ENCODE measurements at regions of chr11 and their contacts with region 1.

Region 1: GRCh38 chr11:35617687-35618496 is at the start of gene FJX1:
- DNase-seq: peak in 3 of 14 experiments; percentile 15 to 36 (median 32)
- ATAC-seq: no peak
- H3K4me3 ChIP-seq: peak within 1 kb of the TSS; percentile 12
- H3K4me3 Mint-ChIP-seq: peak within 1 kb of the TSS; percentile 80
- H3K27ac ChIP-seq: no peak within 1 kb of the TSS
- H3K27ac Mint-ChIP-seq: no peak within 1 kb of the TSS
- H3K4me1 ChIP-seq: peaks cover 19% of the 10 kb centered on the region
- H3K4me1 Mint-ChIP-seq: peaks cover 22% of the 10 kb centered on the region
- H3K27me3 ChIP-seq: peaks cover 33 to 71% of the 10 kb centered on the region in 2 experiments
- H3K27me3 Mint-ChIP-seq: peaks cover 73% of the 10 kb centered on the region
- CTCF ChIP-seq: no peak
- total RNA-seq, gene FJX1: not detected

Region 2: GRCh38 chr11:35780951-35781860 is 163.3 kb after region 1 on chr11:
- CTCF ChIA-PET with region 1: no interaction called
- POLR2A ChIA-PET with region 1: no interaction called
- intact Hi-C with region 1: no loop called
- DNase-seq: no peak
- ATAC-seq: no peak
- H3K4me3 ChIP-seq: no peak overlapping the region
- H3K4me3 Mint-ChIP-seq: no peak overlapping the region
- H3K27ac ChIP-seq: no peak overlapping the region
- H3K27ac Mint-ChIP-seq: no peak overlapping the region
- H3K4me1 ChIP-seq: peaks cover 5% of the 10 kb centered on the region
- H3K4me1 Mint-ChIP-seq: peaks cover 71% of the 10 kb centered on the region
- H3K27me3 ChIP-seq: no peaks in the 10 kb centered on the region
- H3K27me3 Mint-ChIP-seq: no peaks in the 10 kb centered on the region
- CTCF ChIP-seq: no peak

Region 3: GRCh38 chr11:35800970-35801953 is 183.4 kb after region 1 on chr11:
- CTCF ChIA-PET with region 1: no interaction called
- POLR2A ChIA-PET with region 1: no interaction called
- intact Hi-C with region 1: no loop called
- DNase-seq: peak in 1 of 14 experiments; percentile 4
- ATAC-seq: no peak
- H3K4me3 ChIP-seq: no peak overlapping the region
- H3K4me3 Mint-ChIP-seq: no peak overlapping the region
- H3K27ac ChIP-seq: no peak overlapping the region
- H3K27ac Mint-ChIP-seq: peak overlapping the region; percentile 34
- H3K4me1 ChIP-seq: no peaks in the 10 kb centered on the region
- H3K4me1 Mint-ChIP-seq: peaks cover 16% of the 10 kb centered on the region
- H3K27me3 ChIP-seq: no peaks in the 10 kb centered on the region
- H3K27me3 Mint-ChIP-seq: no peaks in the 10 kb centered on the region
- CTCF ChIP-seq: no peak

Region 4: DNA sequence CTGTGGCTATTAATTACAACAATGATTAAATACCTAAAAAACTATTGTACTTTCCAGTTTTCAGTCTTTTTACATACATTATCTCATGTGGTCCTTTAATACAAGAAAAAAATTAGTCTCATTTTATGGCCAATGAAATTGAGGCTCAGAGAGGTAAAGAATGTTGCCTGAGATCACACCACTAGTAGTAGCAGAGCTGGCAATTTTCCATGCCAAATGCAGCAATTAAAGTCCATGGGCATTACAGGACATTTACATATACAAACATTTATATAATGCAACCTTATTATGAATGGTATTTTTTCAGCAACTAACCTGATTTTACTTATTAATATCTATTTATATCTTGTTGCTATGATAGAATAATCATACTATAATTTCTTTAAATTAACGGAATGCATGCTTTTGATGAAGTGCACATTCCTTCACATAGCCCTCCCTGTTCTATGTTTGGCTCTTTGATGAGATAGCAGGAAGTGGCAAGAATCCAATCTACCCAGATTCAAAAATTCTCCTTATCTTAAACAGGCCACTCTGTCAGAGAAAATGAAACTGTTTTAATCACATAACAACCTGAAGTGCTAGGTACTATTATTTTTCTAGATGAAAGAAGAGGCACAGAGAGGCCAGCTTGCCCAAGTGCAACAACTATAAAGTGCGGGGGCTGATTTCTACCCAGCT is 205.1 kb after region 1 on chr11:
- CTCF ChIA-PET with region 1: no interaction called
- POLR2A ChIA-PET with region 1: no interaction called
- intact Hi-C with region 1: loop called in 1 of 2 experiments (anchors 2 kb)
- DNase-seq: no peak
- ATAC-seq: no peak
- H3K4me3 ChIP-seq: no peak overlapping the region
- H3K4me3 Mint-ChIP-seq: no peak overlapping the region
- H3K27ac ChIP-seq: no peak overlapping the region
- H3K27ac Mint-ChIP-seq: no peak overlapping the region
- H3K4me1 ChIP-seq: peaks cover 10% of the 10 kb centered on the region
- H3K4me1 Mint-ChIP-seq: peaks cover 19% of the 10 kb centered on the region
- H3K27me3 ChIP-seq: no peaks in the 10 kb centered on the region
- H3K27me3 Mint-ChIP-seq: no peaks in the 10 kb centered on the region
- CTCF ChIP-seq: no peak

Region 5: GRCh38 chr11:36265793-36266628 is 648.1 kb after region 1 on chr11:
- CTCF ChIA-PET with region 1: interaction called, 6 read pairs
- POLR2A ChIA-PET with region 1: no interaction called
- intact Hi-C with region 1: loop called (anchors 1 kb)
- DNase-seq: peak; percentile 19 to 74 (median 44)
- ATAC-seq: peak; percentile 58
- H3K4me3 ChIP-seq: no peak overlapping the region
- H3K4me3 Mint-ChIP-seq: no peak overlapping the region
- H3K27ac ChIP-seq: no peak overlapping the region
- H3K27ac Mint-ChIP-seq: no peak overlapping the region
- H3K4me1 ChIP-seq: peaks cover 2% of the 10 kb centered on the region
- H3K4me1 Mint-ChIP-seq: no peaks in the 10 kb centered on the region
- H3K27me3 ChIP-seq: no peaks in the 10 kb centered on the region
- H3K27me3 Mint-ChIP-seq: peaks cover 19% of the 10 kb centered on the region
- CTCF ChIP-seq: peak; percentile 79

Region 6: DNA sequence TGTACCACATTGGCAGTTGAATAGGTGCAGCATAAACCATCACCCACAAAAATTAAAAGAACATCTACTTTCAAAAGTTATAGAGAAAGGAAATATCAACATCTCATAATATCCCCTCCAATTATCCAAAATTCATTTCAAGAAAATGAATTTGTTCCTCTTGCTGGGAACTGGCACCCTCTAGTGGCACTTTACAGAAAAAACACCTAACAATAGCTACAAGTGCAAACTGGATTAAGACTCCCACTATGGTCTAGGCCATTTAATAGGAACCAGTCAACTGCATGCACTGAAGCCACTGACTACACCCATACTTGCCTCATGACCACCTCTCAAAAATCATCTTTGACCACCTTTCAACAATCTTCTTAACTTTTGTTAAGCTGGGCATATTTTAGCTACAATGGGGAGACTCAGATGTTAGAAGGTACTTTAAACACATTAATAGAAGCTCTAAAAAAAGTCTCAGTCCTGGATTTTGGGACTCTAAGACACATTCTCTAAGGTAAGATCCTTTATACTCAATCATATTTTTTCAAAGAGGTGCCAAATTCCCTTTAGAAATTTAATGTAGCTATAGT is 874.9 kb after region 1 on chr11:
- CTCF ChIA-PET with region 1: no interaction called
- POLR2A ChIA-PET with region 1: no interaction called
- intact Hi-C with region 1: loop called (anchors 1 to 2 kb)
- DNase-seq: peak in 6 of 14 experiments; percentile 11 to 77 (median 52)
- ATAC-seq: peak; percentile 67
- H3K4me3 ChIP-seq: no peak overlapping the region
- H3K4me3 Mint-ChIP-seq: no peak overlapping the region
- H3K27ac ChIP-seq: no peak overlapping the region
- H3K27ac Mint-ChIP-seq: peak overlapping the region; percentile 18
- H3K4me1 ChIP-seq: peaks cover 2% of the 10 kb centered on the region
- H3K4me1 Mint-ChIP-seq: peaks cover 33% of the 10 kb centered on the region
- H3K27me3 ChIP-seq: no peaks in the 10 kb centered on the region
- H3K27me3 Mint-ChIP-seq: no peaks in the 10 kb centered on the region
- CTCF ChIP-seq: peak; percentile 89

Region 7: GRCh38 chr11:36746886-36747710 is 1129.2 kb after region 1 on chr11:
- CTCF ChIA-PET with region 1: no interaction called
- POLR2A ChIA-PET with region 1: no interaction called
- intact Hi-C with region 1: loop called in 1 of 2 experiments (anchors 5 kb)
- DNase-seq: peak; percentile 53 to 91 (median 70)
- ATAC-seq: peak; percentile 100
- H3K4me3 ChIP-seq: no peak overlapping the region
- H3K4me3 Mint-ChIP-seq: no peak overlapping the region
- H3K27ac ChIP-seq: no peak overlapping the region
- H3K27ac Mint-ChIP-seq: no peak overlapping the region
- H3K4me1 ChIP-seq: no peaks in the 10 kb centered on the region
- H3K4me1 Mint-ChIP-seq: peaks cover 5% of the 10 kb centered on the region
- H3K27me3 ChIP-seq: peaks cover 3 to 5% of the 10 kb centered on the region in 2 experiments
- H3K27me3 Mint-ChIP-seq: peaks cover 38% of the 10 kb centered on the region
- CTCF ChIP-seq: peak; percentile 96

Measured in CD4-positive, alpha-beta T cell (primary cell).